ENCODE measurements at regions of chr20 and their contacts with region 1.

Region 1: DNA sequence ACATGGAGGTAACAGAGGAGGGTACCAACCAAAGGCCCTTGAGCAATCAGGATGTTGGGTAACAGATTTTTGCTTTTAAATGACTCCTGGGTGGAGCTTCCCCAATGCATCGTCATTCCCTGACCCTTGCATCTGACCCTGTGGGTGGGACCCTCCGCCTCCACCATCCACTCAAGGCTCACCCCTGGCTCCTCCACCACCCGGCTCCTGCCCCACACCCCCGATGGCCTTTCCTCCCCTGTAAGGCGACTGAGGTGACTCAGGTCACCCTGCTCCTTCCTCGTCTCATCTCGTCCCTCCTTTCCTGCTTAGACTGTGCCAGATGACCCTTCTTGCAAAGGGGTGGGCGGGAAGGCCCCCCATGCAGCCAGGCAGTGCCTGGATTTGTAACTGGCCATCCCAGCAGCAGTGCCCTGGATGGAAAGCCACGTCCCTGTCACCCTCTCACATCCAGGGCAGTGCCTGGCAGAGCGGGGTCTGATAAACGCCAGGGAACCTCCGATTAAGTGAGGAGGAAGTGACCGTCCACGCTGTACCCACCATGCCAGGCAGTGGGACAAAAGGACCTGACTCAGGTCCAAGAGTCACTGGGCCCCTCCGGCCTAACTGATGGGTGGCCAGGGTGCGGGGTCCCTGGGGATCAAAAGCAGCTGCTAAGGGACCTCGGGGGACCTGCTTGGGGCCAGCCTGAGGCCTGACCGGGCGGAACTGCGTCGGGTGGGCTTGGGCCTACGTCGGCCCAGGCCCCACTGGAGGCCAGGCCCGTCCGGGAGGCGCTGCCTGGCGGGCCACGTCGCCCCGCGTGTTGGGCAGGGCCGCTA is 617 bp upstream of the NPEPL1 start:
- DNase-seq: no peak
- ATAC-seq: 0 out of 2 replicates have a peak, but pooled peaks have one; percentile 1
- H3K4me3 ChIP-seq: no peak overlapping the region
- H3K27ac ChIP-seq: peak overlapping the region; percentile 73
- H3K4me1 ChIP-seq: peaks cover 8% of the 10 kb centered on the region; the same call in 1 of the 2 replicates
- H3K27me3 ChIP-seq: no peaks in the 10 kb centered on the region
- CTCF ChIP-seq: no peak

Region 2: DNA sequence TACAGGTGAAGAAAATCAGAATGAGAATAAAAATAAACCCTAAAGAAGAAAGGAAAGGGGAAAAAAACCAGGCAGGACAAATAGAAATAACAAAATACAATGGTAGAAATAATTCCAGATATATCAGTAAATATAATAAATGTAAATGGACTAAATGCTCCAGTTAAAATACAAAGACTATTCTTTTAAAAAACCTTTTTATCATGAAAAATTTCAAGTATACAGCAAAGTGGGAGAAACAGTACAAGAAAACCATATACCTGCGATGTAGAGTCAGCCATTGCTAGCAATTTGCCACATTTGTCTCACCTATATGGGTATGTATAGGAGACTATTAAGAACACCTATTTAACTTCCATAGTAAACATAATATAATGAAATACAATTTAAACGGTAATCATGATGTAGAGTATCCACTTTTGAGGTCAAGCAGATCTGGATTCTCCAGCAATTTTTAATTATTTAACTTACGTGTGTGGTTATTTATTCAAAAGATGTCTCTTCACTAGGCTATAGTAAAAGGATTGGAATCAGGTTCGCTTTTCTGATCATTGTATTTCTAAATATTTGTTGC is 303.9 kb before region 1 on chr20:
- CTCF ChIA-PET with region 1: interaction called, 12 read pairs
- POLR2A ChIA-PET with region 1: no interaction called
- in situ Hi-C with region 1: no loop called
- intact Hi-C with region 1: no loop called
- DNase-seq: no peak
- ATAC-seq: no peak
- H3K4me3 ChIP-seq: peak overlapping the region; percentile 55 to 85; a peak in 3 of 4 replicates
- H3K27ac ChIP-seq: no peak overlapping the region
- H3K4me1 ChIP-seq: peaks cover 14% of the 10 kb centered on the region
- H3K27me3 ChIP-seq: no peaks in the 10 kb centered on the region
- CTCF ChIP-seq: no peak

Region 3: GRCh38 chr20:58716644-58717510 is 24.9 kb after region 1 on chr20:
- CTCF ChIA-PET with region 1: no interaction called
- POLR2A ChIA-PET with region 1: no interaction called
- in situ Hi-C with region 1: no loop called
- intact Hi-C with region 1: no loop called
- DNase-seq: no peak
- ATAC-seq: peak; percentile 14
- H3K4me3 ChIP-seq: no peak overlapping the region
- H3K27ac ChIP-seq: no peak overlapping the region
- H3K4me1 ChIP-seq: no peaks in the 10 kb centered on the region
- H3K27me3 ChIP-seq: no peaks in the 10 kb centered on the region
- CTCF ChIP-seq: no peak

Region 4: GRCh38 chr20:58740054-58740936 is 48.3 kb after region 1 on chr20:
- CTCF ChIA-PET with region 1: no interaction called
- POLR2A ChIA-PET with region 1: no interaction called
- in situ Hi-C with region 1: no loop called
- intact Hi-C with region 1: no loop called
- DNase-seq: no peak
- ATAC-seq: no peak
- H3K4me3 ChIP-seq: no peak overlapping the region
- H3K27ac ChIP-seq: no peak overlapping the region
- H3K4me1 ChIP-seq: no peaks in the 10 kb centered on the region
- H3K27me3 ChIP-seq: peaks cover 17% of the 10 kb centered on the region
- CTCF ChIP-seq: no peak

Region 5: GRCh38 chr20:59342635-59342957 is 650.6 kb after region 1 on chr20:
- CTCF ChIA-PET with region 1: no interaction called
- POLR2A ChIA-PET with region 1: interaction called, 12 read pairs
- in situ Hi-C with region 1: no loop called
- intact Hi-C with region 1: no loop called
- DNase-seq: no peak
- ATAC-seq: no peak
- H3K4me3 ChIP-seq: no peak overlapping the region
- H3K27ac ChIP-seq: no peak overlapping the region
- H3K4me1 ChIP-seq: no peaks in the 10 kb centered on the region
- H3K27me3 ChIP-seq: peaks cover 3% of the 10 kb centered on the region; the same call in 1 of the 2 replicates
- CTCF ChIP-seq: no peak